ENCODE measurements at regions of chr10 and their contacts with region 1.

Region 1: GRCh38 chr10:69901628-69902505 is 100.2 kb downstream of the COL13A1 start:
- DNase-seq: peak; percentile 46 to 66
- ATAC-seq: peak; percentile 31 to 36
- H3K4me3 ChIP-seq: no peak overlapping the region
- H3K27ac ChIP-seq: peak overlapping the region; percentile 78 to 88 (median 84)
- H3K4me1 ChIP-seq: peaks cover 29% of the 10 kb centered on the region in 2 donors
- H3K27me3 ChIP-seq: no peaks in the 10 kb centered on the region
- CTCF ChIP-seq: peak; percentile 19 to 70 (median 44)
- POLR2A ChIP-seq: no peak

Region 2: GRCh38 chr10:69845574-69846292 is 56.1 kb before region 1 on chr10:
- in situ Hi-C with region 1: no loop called
- intact Hi-C with region 1: loop called (anchors 2 kb)
- DNase-seq: peak; percentile 71 to 79
- ATAC-seq: peak; percentile 83 to 85
- H3K4me3 ChIP-seq: peak overlapping the region in 2 of 4 donors; percentile 1 to 40
- H3K27ac ChIP-seq: peak overlapping the region; percentile 81 to 91 (median 84)
- H3K4me1 ChIP-seq: peaks cover 34 to 35% of the 10 kb centered on the region in 2 donors
- H3K27me3 ChIP-seq: no peaks in the 10 kb centered on the region
- CTCF ChIP-seq: no peak
- POLR2A ChIP-seq: no peak

Region 3: DNA sequence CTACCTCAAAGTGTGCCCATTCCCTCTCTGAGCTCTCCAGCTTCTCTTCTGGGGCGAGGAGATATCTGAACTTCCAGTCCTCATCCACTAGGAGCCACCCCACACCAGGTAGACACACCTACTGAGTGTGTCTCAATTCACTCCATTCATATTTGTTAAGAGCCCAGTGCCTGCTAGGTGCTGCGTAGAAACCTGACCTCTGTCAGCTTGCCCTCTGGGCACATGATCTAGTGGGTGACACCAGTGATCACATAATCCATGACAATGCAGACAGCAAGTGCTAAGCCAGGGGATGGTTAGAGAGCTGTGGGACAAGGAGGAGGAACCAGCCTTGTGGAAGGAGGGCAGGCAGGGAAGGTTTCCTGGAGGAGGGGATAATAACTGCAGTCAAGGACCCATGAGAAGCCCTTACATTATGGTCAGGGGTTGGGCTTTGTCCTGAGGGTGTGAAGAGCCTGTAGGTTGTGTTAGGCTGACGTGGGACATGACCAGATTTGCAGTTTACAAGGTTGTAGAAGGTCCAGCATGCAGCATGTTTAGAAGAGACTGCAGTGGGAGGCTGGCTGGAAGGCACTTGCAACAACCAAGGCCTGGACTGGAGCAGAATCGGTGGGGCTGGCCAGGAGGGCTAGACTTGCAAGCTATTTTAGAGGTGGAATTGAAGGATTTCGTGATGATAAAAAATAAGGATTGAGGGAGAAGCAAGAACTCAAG is 18.4 kb before region 1 on chr10:
- in situ Hi-C with region 1: no loop called
- intact Hi-C with region 1: loop called (anchors 2 kb)
- DNase-seq: peak; percentile 45 to 66
- ATAC-seq: peak; percentile 88 to 91
- H3K4me3 ChIP-seq: no peak overlapping the region
- H3K27ac ChIP-seq: peak overlapping the region in 1 of 4 donors; percentile 15
- H3K4me1 ChIP-seq: no peaks in the 10 kb centered on the region
- H3K27me3 ChIP-seq: no peaks in the 10 kb centered on the region
- CTCF ChIP-seq: peak in 4 of 5 experiments; percentile 45 to 66 (median 49)
- POLR2A ChIP-seq: no peak

Region 4: DNA sequence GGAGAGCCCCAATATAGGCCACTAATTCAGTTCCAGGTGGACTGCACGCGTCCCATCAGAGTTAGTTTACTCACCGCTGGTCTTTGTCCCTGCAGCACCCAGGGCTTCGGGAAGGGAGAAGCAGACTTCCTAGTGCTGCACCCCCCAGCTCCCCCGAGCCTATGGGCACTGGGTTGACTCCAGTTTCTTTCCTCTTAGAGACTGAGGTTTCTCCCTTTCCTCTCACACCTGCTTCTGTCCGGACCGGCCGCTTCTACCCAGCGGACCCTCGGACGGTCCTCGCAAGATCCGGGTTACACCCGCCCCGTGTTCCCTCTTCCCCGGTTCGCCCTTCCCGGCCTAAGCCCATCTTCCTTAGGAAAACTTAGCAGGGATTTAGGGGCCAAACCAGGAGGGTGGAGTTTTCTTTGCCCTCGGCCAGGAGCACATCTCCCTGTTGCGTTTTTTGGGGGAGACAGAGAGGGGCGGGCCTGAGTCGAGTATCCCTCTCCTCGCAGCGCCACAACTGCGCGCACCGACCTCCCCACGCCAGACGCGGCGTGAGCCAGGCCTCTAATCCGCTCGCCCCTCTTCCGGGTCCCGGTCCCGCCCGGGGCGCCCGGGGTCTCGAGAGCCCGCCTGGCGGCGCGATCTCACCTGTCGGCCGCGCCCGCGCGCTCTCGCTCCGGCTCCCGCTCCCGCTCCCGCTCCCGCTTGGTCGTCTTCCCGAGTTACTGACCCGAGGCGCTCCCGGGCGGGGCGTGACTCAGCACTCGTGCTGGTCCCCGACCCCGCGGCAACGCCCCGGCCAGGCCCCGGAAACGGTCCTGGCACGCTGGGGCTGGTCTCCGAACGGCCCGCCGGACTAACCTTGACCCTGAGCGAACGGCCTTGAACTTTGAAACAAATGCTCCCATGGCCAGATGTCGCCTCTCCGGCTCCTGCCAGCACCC is 230.5 kb after region 1 on chr10 and contains the start of gene AIFM2:
- in situ Hi-C with region 1: no loop called
- intact Hi-C with region 1: loop called (anchors 10 kb)
- DNase-seq: peak; percentile 61 to 84
- ATAC-seq: peak; percentile 62 to 70
- H3K4me3 ChIP-seq: peak within 1 kb of the TSS; percentile 68 to 86 (median 72)
- H3K27ac ChIP-seq: peak within 1 kb of the TSS; percentile 83 to 87 (median 86)
- H3K4me1 ChIP-seq: peaks cover 34 to 40% of the 10 kb centered on the region in 2 donors
- H3K27me3 ChIP-seq: no peaks in the 10 kb centered on the region
- CTCF ChIP-seq: peak in 2 of 5 experiments; percentile 18 to 32
- POLR2A ChIP-seq: peak; percentile 45 to 49
- total RNA-seq, gene AIFM2: 6.8 to 11.0 (median 9.8) TPM

Measured in gastrocnemius medialis (tissue), 4 donors.